Naive thymus-derived CD4-positive, alpha-beta T cell (primary cell): ENCODE measurements at regions of chr2 and their contacts with region 1.

Region 1: GRCh38 chr2:73233154-73233931 is at the start of gene PRADC1:
- DNase-seq: peak; percentile 73 to 95 (median 91)
- ATAC-seq: peak; percentile 89
- H3K4me3 ChIP-seq: peak within 1 kb of the TSS; percentile 90
- H3K4me3 Mint-ChIP-seq: peak within 1 kb of the TSS; percentile 88 to 100 (median 98)
- H3K27ac ChIP-seq: peak within 1 kb of the TSS; percentile 94
- H3K27ac Mint-ChIP-seq: peak within 1 kb of the TSS; percentile 77 to 96 (median 94)
- H3K4me1 ChIP-seq: peaks cover 15% of the 10 kb centered on the region in 2 donors
- H3K4me1 Mint-ChIP-seq: peaks cover 25 to 41% (median 37%) of the 10 kb centered on the region in 7 donors
- H3K27me3 ChIP-seq: no peaks in the 10 kb centered on the region
- H3K27me3 Mint-ChIP-seq: peaks cover 0 to 2% (median 0%) of the 10 kb centered on the region in 5 donors
- total RNA-seq, gene PRADC1: 4.3 to 8.8 (median 6.9) TPM

Region 2: GRCh38 chr2:73112913-73113633 is 120.3 kb before region 1 on chr2 and contains the start of gene RAB11FIP5:
- CTCF ChIA-PET with region 1: no interaction called
- POLR2A ChIA-PET with region 1: no interaction called
- intact Hi-C with region 1: loop called (anchors 1 to 2 kb)
- DNase-seq: peak; percentile 70 to 88 (median 76)
- ATAC-seq: peak; percentile 94
- H3K4me3 ChIP-seq: peak within 1 kb of the TSS; percentile 68
- H3K4me3 Mint-ChIP-seq: peak within 1 kb of the TSS; percentile 80 to 92 (median 88)
- H3K27ac ChIP-seq: peak within 1 kb of the TSS; percentile 61
- H3K27ac Mint-ChIP-seq: peak within 1 kb of the TSS in 8 of 9 donors; percentile 41 to 81 (median 74)
- H3K4me1 ChIP-seq: peaks cover 4 to 13% of the 10 kb centered on the region in 2 donors
- H3K4me1 Mint-ChIP-seq: peaks cover 9 to 33% (median 28%) of the 10 kb centered on the region in 7 donors
- H3K27me3 ChIP-seq: no peaks in the 10 kb centered on the region
- H3K27me3 Mint-ChIP-seq: peaks cover 0 to 14% (median 0%) of the 10 kb centered on the region in 5 donors
- total RNA-seq, gene RAB11FIP5: 8.6 to 13.2 (median 11.2) TPM

Region 3: DNA sequence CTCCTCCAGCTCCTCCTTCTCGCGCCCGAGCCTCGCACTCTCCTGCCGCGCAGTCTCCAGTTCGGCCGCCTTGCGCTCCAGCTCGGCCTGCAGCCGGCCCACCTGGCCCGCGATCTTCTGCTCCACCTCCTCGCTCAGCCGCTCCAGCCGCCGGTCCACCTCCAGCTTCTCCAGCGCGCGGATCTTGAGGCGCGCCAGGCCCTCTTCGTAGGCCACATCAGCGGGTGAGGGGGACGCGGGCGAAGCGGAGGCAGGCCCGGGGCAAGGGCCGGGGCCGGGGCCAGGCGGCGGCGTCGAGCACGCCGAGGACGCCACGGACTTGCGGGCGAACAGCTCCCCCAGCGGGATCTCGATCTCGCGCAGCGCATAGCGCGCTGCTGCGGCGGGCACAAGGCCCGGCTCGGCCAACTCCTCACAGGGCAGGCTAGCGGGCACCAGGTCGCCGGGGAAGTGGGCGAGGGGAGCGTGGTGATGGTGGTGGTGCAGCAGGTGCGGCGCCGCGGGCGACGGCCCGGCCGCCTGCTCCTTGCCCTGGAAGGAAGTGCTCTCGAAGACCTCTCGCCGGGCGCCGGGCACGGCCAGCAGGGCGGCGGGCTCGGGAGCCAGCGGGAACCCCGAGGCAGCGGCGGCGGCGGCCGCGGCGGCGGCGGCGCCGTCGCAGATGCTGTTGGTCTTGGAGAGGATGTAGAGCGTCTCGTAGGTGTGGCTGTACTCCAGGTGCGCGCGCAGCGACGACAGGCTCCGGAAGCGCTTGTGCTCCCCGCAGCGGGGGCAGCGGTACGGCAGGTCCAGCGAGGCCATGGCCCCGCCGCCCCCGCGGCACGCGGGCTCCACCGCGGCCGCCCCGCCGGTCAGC is 35.7 kb after region 1 on chr2:
- CTCF ChIA-PET with region 1: interaction called, 3 read pairs
- POLR2A ChIA-PET with region 1: interaction called, 10 read pairs
- intact Hi-C with region 1: loop called (anchors 1 kb)
- DNase-seq: peak; percentile 62 to 81 (median 76)
- ATAC-seq: peak; percentile 91
- H3K4me3 ChIP-seq: peak overlapping the region; percentile 35
- H3K4me3 Mint-ChIP-seq: peak overlapping the region in 9 of 10 donors; percentile 32 to 78 (median 64)
- H3K27ac ChIP-seq: peak overlapping the region; percentile 62
- H3K27ac Mint-ChIP-seq: peak overlapping the region in 4 of 9 donors; percentile 29 to 81 (median 56)
- H3K4me1 ChIP-seq: peaks cover 0 to 12% of the 10 kb centered on the region in 2 donors
- H3K4me1 Mint-ChIP-seq: peaks cover 23 to 34% (median 26%) of the 10 kb centered on the region in 7 donors
- H3K27me3 ChIP-seq: no peaks in the 10 kb centered on the region
- H3K27me3 Mint-ChIP-seq: no peaks in the 10 kb centered on the region

Region 4: GRCh38 chr2:73779467-73780236 is 546.3 kb after region 1 on chr2 and contains the start of gene DUSP11:
- CTCF ChIA-PET with region 1: no interaction called
- POLR2A ChIA-PET with region 1: no interaction called
- intact Hi-C with region 1: loop called in 1 of 2 experiments (anchors 10 kb)
- DNase-seq: peak; percentile 92 to 98 (median 95)
- ATAC-seq: peak; percentile 100
- H3K4me3 ChIP-seq: peak within 1 kb of the TSS; percentile 87
- H3K4me3 Mint-ChIP-seq: peak within 1 kb of the TSS; percentile 95 to 100 (median 98)
- H3K27ac ChIP-seq: peak within 1 kb of the TSS; percentile 95
- H3K27ac Mint-ChIP-seq: peak within 1 kb of the TSS; percentile 95 to 100 (median 98)
- H3K4me1 ChIP-seq: peaks cover 0 to 16% of the 10 kb centered on the region in 2 donors
- H3K4me1 Mint-ChIP-seq: peaks cover 23 to 49% (median 35%) of the 10 kb centered on the region in 7 donors
- H3K27me3 ChIP-seq: no peaks in the 10 kb centered on the region
- H3K27me3 Mint-ChIP-seq: peaks cover 0 to 4% (median 4%) of the 10 kb centered on the region in 5 donors
- total RNA-seq, gene DUSP11: 32.0 to 54.1 (median 43.8) TPM

Region 5: DNA sequence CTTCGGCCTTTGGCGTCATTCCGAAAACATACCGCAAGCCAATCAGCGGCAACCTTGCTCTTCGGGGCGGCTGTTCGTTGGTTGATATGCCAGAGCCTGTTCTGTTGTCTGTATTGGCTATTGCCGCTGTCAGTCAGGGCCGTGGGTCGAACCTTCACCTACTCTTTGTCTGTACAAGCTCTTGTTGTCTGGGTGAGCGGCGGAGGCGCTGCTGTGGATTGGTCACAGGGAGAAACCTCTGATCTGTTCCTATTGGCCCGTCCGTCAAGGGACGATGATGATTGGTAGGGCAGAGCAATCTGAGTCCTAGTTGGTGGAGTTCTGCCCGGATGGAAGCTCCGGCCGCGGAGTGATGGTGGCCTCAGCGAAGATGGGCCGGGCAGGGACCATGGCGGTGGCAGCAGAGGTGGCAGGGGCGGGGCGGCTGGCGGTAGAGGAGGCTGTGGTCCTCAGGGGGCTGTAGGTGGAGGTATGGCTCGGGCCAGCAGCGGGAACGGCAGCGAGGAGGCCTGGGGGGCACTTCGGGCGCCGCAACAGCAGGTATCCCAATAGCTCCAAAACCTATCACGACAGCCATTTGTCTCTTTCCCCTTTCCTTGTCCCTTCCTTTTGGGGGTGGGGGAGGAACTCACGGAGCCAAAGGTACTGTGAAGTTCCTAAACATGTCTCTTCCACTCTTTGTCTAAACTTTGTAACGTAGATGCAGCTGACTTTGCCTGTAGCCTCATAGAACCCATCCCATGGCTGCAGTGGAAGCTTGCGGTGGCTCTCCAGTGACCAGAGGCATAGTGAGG is 1225.0 kb after region 1 on chr2 and contains the start of gene WBP1:
- CTCF ChIA-PET with region 1: no interaction called
- POLR2A ChIA-PET with region 1: interaction called, 5 read pairs
- intact Hi-C with region 1: loop called (anchors 1 kb)
- DNase-seq: peak in 8 of 9 donors; percentile 85 to 100 (median 100)
- ATAC-seq: peak; percentile 89
- H3K4me3 ChIP-seq: peak within 1 kb of the TSS; percentile 70
- H3K4me3 Mint-ChIP-seq: peak within 1 kb of the TSS; percentile 87 to 99 (median 96)
- H3K27ac ChIP-seq: peak within 1 kb of the TSS; percentile 100
- H3K27ac Mint-ChIP-seq: peak within 1 kb of the TSS; percentile 88 to 100 (median 99)
- H3K4me1 ChIP-seq: peaks cover 30 to 34% of the 10 kb centered on the region in 2 donors
- H3K4me1 Mint-ChIP-seq: peaks cover 38 to 68% (median 58%) of the 10 kb centered on the region in 7 donors
- H3K27me3 ChIP-seq: no peaks in the 10 kb centered on the region
- H3K27me3 Mint-ChIP-seq: peaks cover 0 to 2% (median 0%) of the 10 kb centered on the region in 5 donors
- total RNA-seq, gene WBP1: 53.6 to 127 (median 85.4) TPM

Region 6: DNA sequence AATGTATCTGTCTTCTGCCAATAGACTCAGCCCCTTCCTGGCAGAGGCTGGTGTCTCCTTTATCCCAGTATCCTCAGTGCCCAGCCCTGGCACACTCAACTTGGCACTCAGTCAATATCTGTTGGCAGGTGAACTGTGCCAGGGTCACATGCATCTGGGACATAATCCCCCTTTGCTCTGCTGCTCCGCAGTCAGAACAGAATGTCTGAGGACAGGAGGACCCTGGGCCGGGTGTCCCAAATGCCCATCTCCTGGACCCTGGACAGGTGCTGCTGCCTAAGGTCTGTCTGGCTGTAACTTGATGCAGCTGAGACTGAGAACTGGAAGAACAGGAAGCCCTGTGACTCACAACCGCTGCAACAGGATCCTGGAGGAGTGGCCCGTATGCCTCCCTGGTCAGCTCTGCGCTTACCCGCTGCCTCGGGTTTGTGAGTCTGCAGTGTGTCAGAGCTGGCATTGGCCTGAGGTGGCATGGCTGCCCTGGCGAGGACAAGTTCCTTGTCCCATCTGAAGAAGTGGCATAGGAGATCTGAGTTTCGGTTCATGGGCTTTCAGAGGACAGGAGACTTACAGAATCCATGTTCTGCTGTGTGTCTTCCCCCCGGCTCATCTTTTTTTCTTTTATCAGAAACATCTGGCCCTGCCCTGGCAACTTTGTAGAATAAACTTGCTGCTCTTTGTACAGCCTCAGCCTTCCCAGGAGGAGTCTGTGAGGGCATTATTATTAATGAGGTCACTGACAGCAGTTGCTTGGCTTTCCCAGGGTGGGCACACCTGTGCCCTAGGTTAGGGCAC is 1612.1 kb after region 1 on chr2:
- CTCF ChIA-PET with region 1: no interaction called
- POLR2A ChIA-PET with region 1: no interaction called
- intact Hi-C with region 1: loop called in 1 of 2 experiments (anchors 10 kb)
- DNase-seq: peak in 2 of 9 donors; percentile 23 to 51
- ATAC-seq: peak; percentile 70
- H3K4me3 ChIP-seq: peak overlapping the region; percentile 29
- H3K4me3 Mint-ChIP-seq: peak overlapping the region; percentile 65 to 87 (median 78)
- H3K27ac ChIP-seq: peak overlapping the region; percentile 39
- H3K27ac Mint-ChIP-seq: peak overlapping the region; percentile 85 to 99 (median 94)
- H3K4me1 ChIP-seq: peaks cover 37 to 97% of the 10 kb centered on the region in 2 donors
- H3K4me1 Mint-ChIP-seq: peaks cover 75 to 100% (median 97%) of the 10 kb centered on the region in 7 donors
- H3K27me3 ChIP-seq: no peaks in the 10 kb centered on the region
- H3K27me3 Mint-ChIP-seq: no peaks in the 10 kb centered on the region